Left ventricle myocardium inferior (tissue), 1 donor: ENCODE measurements at regions of chr13 and their contacts with region 1.

Region 1: DNA sequence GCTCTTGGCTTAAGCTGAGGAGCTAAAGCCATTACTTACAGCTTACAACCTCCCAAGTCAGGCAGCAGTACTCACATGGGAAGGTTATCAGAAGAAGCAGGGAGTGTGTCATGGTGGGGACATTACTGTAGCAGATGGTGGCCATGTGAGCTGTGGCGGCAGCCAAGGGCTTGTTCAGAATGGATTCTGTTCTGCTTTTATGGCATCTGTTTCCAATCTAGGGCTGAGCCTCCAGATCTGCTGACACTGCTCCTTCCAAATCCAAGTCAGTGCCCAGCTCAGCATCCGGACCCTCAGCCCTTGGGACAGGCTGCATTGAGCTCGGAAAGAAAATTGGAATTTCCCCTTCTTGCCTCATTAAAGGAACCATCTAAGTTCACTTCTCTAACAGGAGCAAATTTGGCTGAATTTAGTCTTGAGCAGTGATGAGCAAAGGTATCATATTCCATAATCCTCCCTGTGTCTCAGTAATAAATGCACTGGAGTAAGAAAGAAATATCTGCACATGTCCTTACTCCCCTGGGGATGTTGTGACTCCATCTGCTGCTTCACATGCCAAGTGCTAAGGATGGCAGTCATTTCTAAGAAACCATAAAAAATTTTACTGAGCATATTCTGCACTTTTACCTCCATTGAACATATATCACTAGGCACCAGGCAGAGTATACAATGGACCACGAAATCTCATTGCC is 73.9 kb downstream of the KCTD12 start:
- DNase-seq: peak; percentile 75
- H3K4me3 ChIP-seq: no peak overlapping the region
- H3K27ac ChIP-seq: peak overlapping the region; percentile 68
- H3K4me1 ChIP-seq: peaks cover 29% of the 10 kb centered on the region
- H3K27me3 ChIP-seq: no peaks in the 10 kb centered on the region
- CTCF ChIP-seq: no peak

Region 2: DNA sequence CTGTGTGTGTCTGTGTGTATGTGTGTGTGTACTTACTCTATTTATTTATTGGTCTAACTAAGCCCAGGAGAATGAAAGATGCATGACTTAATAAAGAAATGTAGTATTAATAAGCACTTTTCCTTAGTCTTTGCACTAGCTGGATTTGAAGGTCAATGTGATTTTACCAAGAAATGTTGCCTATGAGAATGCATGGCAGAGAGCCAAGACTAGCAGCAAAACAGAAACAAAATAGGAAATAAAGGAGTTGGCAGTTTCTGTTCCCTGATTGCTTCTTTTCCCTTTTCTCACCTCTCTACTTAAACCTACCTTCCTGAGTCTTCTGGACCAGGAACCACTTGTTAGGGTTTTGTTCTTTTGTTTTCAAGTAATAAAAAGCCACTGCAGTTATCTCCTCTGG is 212.3 kb before region 1 on chr13:
- intact Hi-C with region 1: no loop called
- DNase-seq: no peak
- H3K4me3 ChIP-seq: no peak overlapping the region
- H3K27ac ChIP-seq: no peak overlapping the region
- H3K4me1 ChIP-seq: peaks cover 3% of the 10 kb centered on the region
- H3K27me3 ChIP-seq: no peaks in the 10 kb centered on the region
- CTCF ChIP-seq: no peak

Region 3: DNA sequence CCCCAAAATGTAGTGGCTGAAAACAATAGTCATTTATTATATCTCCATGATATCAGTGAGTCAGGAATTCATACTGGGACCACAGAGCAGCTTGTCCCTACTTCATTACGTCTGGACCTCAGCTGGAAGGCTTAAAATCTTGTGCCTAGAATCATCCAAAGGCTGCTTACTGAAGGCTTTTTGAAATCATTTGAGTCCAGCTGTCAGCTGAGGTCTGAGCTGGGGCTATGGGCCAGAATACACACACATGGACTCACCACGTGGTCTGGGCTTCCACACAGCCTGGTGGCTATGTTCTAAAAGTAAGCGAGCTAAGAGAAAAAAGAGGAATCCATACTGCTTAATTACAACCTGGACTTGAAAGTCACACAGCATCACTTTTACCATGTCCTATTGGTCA is 135.3 kb before region 1 on chr13:
- intact Hi-C with region 1: loop called (anchors 10 kb)
- DNase-seq: peak; percentile 63
- H3K4me3 ChIP-seq: no peak overlapping the region
- H3K27ac ChIP-seq: peak overlapping the region; percentile 49
- H3K4me1 ChIP-seq: peaks cover 7% of the 10 kb centered on the region
- H3K27me3 ChIP-seq: no peaks in the 10 kb centered on the region
- CTCF ChIP-seq: no peak